Activated CD8-positive, alpha-beta T cell treated with anti-CD3 and anti-CD28 coated beads for 36 hours (primary cell): ENCODE measurements at regions of chr2 and their contacts with region 1.

Region 1: DNA sequence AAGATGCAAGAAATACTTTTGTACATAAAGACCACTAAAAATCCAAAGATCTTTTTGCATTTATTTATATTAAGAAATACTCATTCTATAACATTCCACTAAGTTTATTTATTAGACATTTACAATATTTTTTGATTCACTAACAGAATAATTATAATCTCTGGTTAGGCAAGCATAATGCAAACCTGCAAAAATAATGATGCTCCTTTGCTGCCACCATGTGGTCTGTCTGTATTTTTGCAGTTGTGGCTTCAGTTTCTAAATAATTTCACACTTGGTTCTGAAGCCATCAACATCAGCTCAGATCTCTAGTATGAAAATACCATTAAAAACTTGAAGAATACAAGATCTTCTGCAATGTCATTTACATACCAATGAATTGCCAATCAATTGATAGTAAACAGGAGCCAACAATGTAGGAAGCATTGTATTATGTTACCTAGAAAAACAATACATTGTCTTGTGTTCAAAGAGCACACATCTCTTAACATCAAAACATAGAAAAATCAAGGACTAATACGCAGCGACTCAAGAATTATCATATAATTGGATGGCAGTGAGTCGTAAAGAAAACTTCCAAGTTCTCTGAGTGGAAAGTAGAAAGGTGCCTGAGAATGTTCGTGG is 28.8 kb upstream of the WDR75 start:
- DNase-seq: peak; percentile 42
- ATAC-seq: peak; percentile 65
- H3K4me3 Mint-ChIP-seq: no peak overlapping the region
- H3K27ac Mint-ChIP-seq: no peak overlapping the region
- H3K4me1 Mint-ChIP-seq: peaks cover 30% of the 10 kb centered on the region
- H3K27me3 Mint-ChIP-seq: no peaks in the 10 kb centered on the region
- CTCF ChIP-seq: peak; percentile 92

Region 2: DNA sequence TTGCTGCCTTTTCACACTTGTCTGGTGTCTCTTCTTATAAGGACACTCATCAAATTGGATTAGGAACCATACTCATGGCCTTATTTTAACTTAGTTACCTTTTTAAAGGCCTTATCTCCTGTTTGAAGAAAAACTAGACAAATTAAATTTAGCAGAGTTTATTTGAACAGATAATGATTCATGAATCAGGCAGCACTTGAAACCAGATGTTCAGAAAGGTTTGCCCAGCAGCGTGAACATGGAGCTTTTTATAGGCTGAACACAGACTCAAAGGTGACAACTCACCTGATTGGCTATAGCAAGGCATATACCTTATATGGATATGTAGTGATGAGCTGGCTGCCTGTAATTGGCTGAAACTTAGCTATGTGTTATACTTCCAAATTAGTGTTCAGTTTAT is 882.7 kb before region 1 on chr2:
- CTCF ChIA-PET with region 1: interaction called, 6 read pairs
- POLR2A ChIA-PET with region 1: no interaction called
- intact Hi-C with region 1: loop called (anchors 5 kb)
- DNase-seq: no peak
- ATAC-seq: no peak
- H3K4me3 Mint-ChIP-seq: no peak overlapping the region
- H3K27ac Mint-ChIP-seq: no peak overlapping the region
- H3K4me1 Mint-ChIP-seq: no peaks in the 10 kb centered on the region
- H3K27me3 Mint-ChIP-seq: no peaks in the 10 kb centered on the region
- CTCF ChIP-seq: no peak

Region 3: DNA sequence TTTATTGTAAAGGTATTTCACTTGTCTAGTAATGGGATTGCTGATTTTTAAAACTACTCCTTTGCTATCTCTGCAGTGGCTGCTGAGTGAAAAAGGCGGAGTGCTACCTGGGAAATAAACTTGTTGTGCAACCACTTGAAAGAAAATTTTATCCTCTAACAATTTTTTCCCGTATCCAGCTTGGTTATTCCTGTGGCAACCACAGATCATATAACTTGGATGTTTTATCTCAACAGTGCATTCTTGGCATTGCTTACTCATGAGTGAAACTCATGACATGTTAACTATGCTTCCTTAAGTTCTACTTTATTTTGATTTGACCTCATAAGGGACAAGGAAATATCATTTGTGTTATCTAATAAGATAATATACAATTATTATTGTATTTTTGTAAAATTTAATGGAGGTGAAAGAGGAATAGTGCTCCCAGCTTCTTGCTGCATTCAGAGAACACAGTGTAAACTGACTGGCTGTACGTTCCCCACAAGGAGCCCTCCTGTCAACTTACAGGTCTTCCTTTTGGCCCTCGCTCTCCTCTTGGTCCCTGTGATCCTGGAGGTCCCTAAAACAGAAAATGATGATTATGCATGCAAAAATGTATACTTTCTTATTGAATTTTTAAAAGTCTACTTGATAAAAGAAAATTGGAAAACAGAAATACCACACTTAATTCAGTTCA is 315.5 kb before region 1 on chr2:
- CTCF ChIA-PET with region 1: interaction called, 32 read pairs
- POLR2A ChIA-PET with region 1: no interaction called
- intact Hi-C with region 1: loop called (anchors 5 kb)
- DNase-seq: no peak
- ATAC-seq: no peak
- H3K4me3 Mint-ChIP-seq: no peak overlapping the region
- H3K27ac Mint-ChIP-seq: no peak overlapping the region
- H3K4me1 Mint-ChIP-seq: no peaks in the 10 kb centered on the region
- H3K27me3 Mint-ChIP-seq: no peaks in the 10 kb centered on the region
- CTCF ChIP-seq: no peak

Region 4: DNA sequence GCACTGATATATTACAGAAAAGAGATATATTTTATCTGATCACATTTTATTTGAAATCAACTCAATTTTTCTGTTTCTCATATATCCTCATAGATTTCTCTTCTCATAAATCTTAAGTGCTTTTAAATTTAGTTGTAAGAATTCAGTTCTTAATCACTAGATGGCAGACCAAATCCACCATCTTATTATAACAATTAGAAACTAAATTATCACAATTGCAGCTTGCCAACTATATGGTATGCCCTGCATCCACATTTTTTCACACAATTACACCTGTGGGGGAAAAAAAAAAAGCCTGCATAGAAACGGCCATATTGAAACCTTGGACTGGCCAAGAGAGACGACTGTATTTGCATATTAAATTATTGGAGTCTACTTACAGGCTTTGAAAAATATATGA is 297.3 kb before region 1 on chr2:
- CTCF ChIA-PET with region 1: interaction called, 10 read pairs
- POLR2A ChIA-PET with region 1: no interaction called
- intact Hi-C with region 1: no loop called
- DNase-seq: no peak
- ATAC-seq: no peak
- H3K4me3 Mint-ChIP-seq: no peak overlapping the region
- H3K27ac Mint-ChIP-seq: no peak overlapping the region
- H3K4me1 Mint-ChIP-seq: peaks cover 19% of the 10 kb centered on the region
- H3K27me3 Mint-ChIP-seq: no peaks in the 10 kb centered on the region
- CTCF ChIP-seq: peak; percentile 20

Region 5: GRCh38 chr2:189287982-189288521 is 124.4 kb before region 1 on chr2:
- CTCF ChIA-PET with region 1: interaction called, 12 read pairs
- POLR2A ChIA-PET with region 1: no interaction called
- intact Hi-C with region 1: loop called (anchors 5 kb)
- DNase-seq: no peak
- ATAC-seq: peak; percentile 65
- H3K4me3 Mint-ChIP-seq: no peak overlapping the region
- H3K27ac Mint-ChIP-seq: peak overlapping the region; percentile 75
- H3K4me1 Mint-ChIP-seq: peaks cover 62% of the 10 kb centered on the region
- H3K27me3 Mint-ChIP-seq: no peaks in the 10 kb centered on the region
- CTCF ChIP-seq: peak; percentile 42

Region 6: GRCh38 chr2:189337656-189338055 is 74.8 kb before region 1 on chr2:
- CTCF ChIA-PET with region 1: no interaction called
- POLR2A ChIA-PET with region 1: no interaction called
- intact Hi-C with region 1: no loop called
- DNase-seq: no peak
- ATAC-seq: no peak
- H3K4me3 Mint-ChIP-seq: no peak overlapping the region
- H3K27ac Mint-ChIP-seq: no peak overlapping the region
- H3K4me1 Mint-ChIP-seq: no peaks in the 10 kb centered on the region
- H3K27me3 Mint-ChIP-seq: no peaks in the 10 kb centered on the region
- CTCF ChIP-seq: no peak

Region 7: GRCh38 chr2:189363559-189363958 is 48.9 kb before region 1 on chr2:
- CTCF ChIA-PET with region 1: interaction called, 4 read pairs
- POLR2A ChIA-PET with region 1: no interaction called
- intact Hi-C with region 1: loop called (anchors 2 kb)
- DNase-seq: no peak
- ATAC-seq: no peak
- H3K4me3 Mint-ChIP-seq: no peak overlapping the region
- H3K27ac Mint-ChIP-seq: no peak overlapping the region
- H3K4me1 Mint-ChIP-seq: peaks cover 22% of the 10 kb centered on the region
- H3K27me3 Mint-ChIP-seq: no peaks in the 10 kb centered on the region
- CTCF ChIP-seq: no peak

Region 8: GRCh38 chr2:189661148-189661956 is 248.9 kb after region 1 on chr2 and contains the start of gene ASNSD1:
- CTCF ChIA-PET with region 1: no interaction called
- POLR2A ChIA-PET with region 1: no interaction called
- intact Hi-C with region 1: no loop called
- DNase-seq: peak; percentile 98
- ATAC-seq: peak; percentile 87
- H3K4me3 Mint-ChIP-seq: no peak within 1 kb of the TSS
- H3K27ac Mint-ChIP-seq: no peak within 1 kb of the TSS
- H3K4me1 Mint-ChIP-seq: peaks cover 54% of the 10 kb centered on the region
- H3K27me3 Mint-ChIP-seq: no peaks in the 10 kb centered on the region
- CTCF ChIP-seq: peak; percentile 85
- total RNA-seq, gene ASNSD1: 41.0 to 43.2 TPM